Activated CD8-positive, alpha-beta T cell treated with anti-CD3 and anti-CD28 coated beads for 36 hours (primary cell): ENCODE measurements at regions of chr12 and their contacts with region 1.

Region 1: DNA sequence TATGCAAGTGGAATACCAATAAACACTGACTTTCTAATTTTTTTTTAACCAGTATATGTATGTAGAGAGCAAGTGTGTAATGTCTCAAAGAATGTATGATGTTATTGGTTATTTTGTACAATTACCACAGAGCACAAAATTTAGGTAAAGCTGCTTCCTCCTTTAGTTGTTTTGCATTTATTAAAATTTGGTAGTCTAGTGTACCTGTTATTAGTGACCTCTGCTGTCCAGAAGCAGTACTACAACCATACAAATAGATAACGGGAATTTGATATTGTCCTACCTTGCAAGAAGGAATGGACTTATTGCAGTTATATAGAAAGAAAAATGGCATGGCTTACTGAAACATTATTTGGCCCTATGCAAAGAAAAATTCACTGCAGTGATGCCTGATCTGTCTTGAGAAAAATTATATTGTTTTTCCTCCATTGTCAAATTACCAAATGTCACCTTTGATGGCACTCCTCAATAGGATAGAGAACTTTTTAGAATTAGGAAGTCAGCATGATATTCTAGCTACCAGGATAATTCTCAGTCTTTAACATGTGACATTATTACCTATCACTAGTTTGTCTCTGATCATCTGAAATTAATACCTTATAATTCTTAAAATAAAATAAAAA is 153.9 kb upstream of the RMST start:
- DNase-seq: peak; percentile 1
- ATAC-seq: peak; percentile 49
- H3K4me3 Mint-ChIP-seq: no peak overlapping the region
- H3K27ac Mint-ChIP-seq: no peak overlapping the region
- H3K4me1 Mint-ChIP-seq: no peaks in the 10 kb centered on the region
- H3K27me3 Mint-ChIP-seq: peaks cover 5% of the 10 kb centered on the region
- CTCF ChIP-seq: peak; percentile 84

Region 2: DNA sequence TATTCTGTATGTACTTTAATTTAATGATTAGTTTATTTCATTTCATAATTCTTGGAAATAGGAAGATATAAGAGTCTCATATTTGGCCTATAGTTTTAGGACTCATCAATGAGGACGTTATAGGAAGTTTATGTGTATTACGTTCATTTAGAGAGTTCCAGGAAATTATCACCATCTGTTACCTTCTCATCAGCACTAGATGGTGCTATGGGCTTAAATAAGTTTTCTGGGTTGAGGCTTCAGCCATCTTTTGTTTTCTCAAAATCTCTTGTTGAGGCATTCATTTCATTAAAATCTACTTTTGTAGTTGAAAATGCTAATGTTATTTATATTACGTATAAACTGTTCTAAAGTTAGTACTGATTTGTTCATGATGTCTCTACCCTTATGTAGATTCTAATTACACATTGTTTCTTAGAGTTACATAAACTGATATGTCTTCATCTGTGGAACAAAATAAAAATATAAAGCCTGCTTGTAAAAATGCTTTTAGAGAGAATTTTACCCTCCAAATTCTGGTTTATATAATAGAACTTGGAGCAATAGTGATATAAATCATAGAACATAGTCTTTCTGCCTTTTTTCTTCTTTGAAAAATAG is 730.1 kb before region 1 on chr12:
- CTCF ChIA-PET with region 1: interaction called, 6 read pairs
- POLR2A ChIA-PET with region 1: no interaction called
- intact Hi-C with region 1: loop called (anchors 2 kb)
- DNase-seq: peak; percentile 10
- ATAC-seq: peak; percentile 77
- H3K4me3 Mint-ChIP-seq: no peak overlapping the region
- H3K27ac Mint-ChIP-seq: no peak overlapping the region
- H3K4me1 Mint-ChIP-seq: no peaks in the 10 kb centered on the region
- H3K27me3 Mint-ChIP-seq: peaks cover 7% of the 10 kb centered on the region
- CTCF ChIP-seq: peak; percentile 66

Region 3: GRCh38 chr12:96985480-96986362 is 323.0 kb before region 1 on chr12:
- CTCF ChIA-PET with region 1: interaction called, 15 read pairs
- POLR2A ChIA-PET with region 1: no interaction called
- intact Hi-C with region 1: loop called (anchors 5 kb)
- DNase-seq: peak; percentile 38
- ATAC-seq: peak; percentile 93
- H3K4me3 Mint-ChIP-seq: peak overlapping the region; percentile 51
- H3K27ac Mint-ChIP-seq: no peak overlapping the region
- H3K4me1 Mint-ChIP-seq: peaks cover 2% of the 10 kb centered on the region
- H3K27me3 Mint-ChIP-seq: peaks cover 17% of the 10 kb centered on the region
- CTCF ChIP-seq: peak; percentile 95

Region 4: DNA sequence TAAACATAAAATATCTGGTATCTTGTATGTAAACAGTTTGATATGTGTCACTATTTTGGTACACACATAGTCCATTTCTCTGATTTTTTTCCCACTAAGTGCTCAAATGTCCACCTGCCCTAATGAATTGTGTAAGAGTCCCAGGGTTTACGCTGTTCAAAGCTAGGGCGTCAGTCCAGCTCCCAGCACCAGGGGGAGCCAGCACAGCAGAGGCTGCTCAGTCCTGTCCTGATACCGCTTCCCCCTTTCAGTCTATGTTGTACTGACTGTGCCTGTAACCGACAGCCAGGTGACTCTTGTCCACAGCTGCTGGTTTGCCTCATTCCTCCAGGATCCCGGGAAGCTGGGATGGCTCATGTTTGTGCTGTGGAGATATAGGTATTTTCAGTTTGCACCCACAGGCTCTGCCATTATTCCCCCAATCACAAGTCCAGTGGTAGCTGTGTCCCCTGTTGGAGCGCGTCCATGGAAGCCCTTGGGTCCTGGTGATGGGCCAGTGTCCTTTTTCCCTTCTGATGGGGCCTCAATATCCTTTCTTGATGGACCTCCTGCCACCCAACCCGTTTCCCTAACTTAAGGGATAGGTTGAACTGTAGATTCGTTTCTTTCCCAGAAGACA is 159.6 kb before region 1 on chr12:
- CTCF ChIA-PET with region 1: interaction called, 3 read pairs
- POLR2A ChIA-PET with region 1: no interaction called
- intact Hi-C with region 1: loop called (anchors 1 kb)
- DNase-seq: peak; percentile 70
- ATAC-seq: peak; percentile 85
- H3K4me3 Mint-ChIP-seq: no peak overlapping the region
- H3K27ac Mint-ChIP-seq: no peak overlapping the region
- H3K4me1 Mint-ChIP-seq: no peaks in the 10 kb centered on the region
- H3K27me3 Mint-ChIP-seq: peaks cover 1% of the 10 kb centered on the region
- CTCF ChIP-seq: peak; percentile 64

Region 5: DNA sequence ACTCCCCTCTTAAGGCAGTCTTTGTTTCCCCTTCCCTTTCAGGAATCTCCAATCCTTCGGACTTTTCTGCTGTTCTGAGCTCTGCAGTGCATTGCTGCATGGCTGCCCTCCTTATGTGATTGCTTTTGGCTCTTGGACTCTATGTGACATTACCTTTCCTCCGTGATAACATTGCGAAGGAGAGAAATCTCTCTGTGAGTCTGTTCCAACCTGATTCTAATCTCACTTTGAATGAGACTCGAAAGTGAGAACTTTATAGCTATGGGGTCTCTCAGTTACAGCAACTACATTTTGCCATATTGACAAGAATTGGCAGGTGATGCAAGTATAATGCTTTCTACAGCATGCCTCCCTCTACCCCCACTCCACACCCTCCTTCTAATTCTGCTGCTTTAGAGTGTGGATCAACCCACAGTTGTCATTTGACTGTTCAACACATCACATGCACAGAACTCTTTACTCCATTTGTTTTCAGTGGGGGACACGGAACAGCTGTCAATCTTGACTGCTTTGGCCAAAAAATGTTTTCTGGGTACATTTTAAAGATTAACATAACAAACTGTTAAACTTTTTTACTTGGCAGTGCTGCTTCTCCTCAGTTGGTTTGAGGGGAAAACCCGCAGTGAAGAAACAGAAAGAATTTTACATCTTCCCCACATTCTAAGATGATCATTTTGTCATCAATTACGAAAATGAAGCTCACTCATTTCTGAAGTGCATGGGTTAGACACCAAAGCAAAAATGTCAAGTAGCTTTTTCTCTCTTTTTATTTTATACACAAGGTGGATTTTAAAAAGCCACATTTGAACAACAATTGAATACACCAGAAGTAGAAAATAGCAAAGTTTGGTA is 28.4 kb after region 1 on chr12:
- CTCF ChIA-PET with region 1: no interaction called
- POLR2A ChIA-PET with region 1: no interaction called
- intact Hi-C with region 1: no loop called
- DNase-seq: no peak
- ATAC-seq: no peak
- H3K4me3 Mint-ChIP-seq: no peak overlapping the region
- H3K27ac Mint-ChIP-seq: no peak overlapping the region
- H3K4me1 Mint-ChIP-seq: no peaks in the 10 kb centered on the region
- H3K27me3 Mint-ChIP-seq: peaks cover 8% of the 10 kb centered on the region
- CTCF ChIP-seq: no peak